Activated CD4-positive, alpha-beta memory T cell treated with anti-CD3 and anti-CD28 coated beads for 36 hours (primary cell): ENCODE measurements at regions of chr16 and their contacts with region 1.

Region 1: GRCh38 chr16:84062734-84063640 is 20.4 kb upstream of the SLC38A8 start:
- DNase-seq: peak; percentile 82
- H3K4me3 Mint-ChIP-seq: no peak overlapping the region
- H3K27ac Mint-ChIP-seq: no peak overlapping the region
- H3K4me1 Mint-ChIP-seq: peaks cover 7% of the 10 kb centered on the region
- H3K27me3 Mint-ChIP-seq: no peaks in the 10 kb centered on the region

Region 2: GRCh38 chr16:83826146-83826913 is 236.7 kb before region 1 on chr16:
- CTCF ChIA-PET with region 1: interaction called, 5 read pairs
- POLR2A ChIA-PET with region 1: no interaction called
- intact Hi-C with region 1: loop called (anchors 5 kb)
- DNase-seq: peak; percentile 87
- H3K4me3 Mint-ChIP-seq: no peak overlapping the region
- H3K27ac Mint-ChIP-seq: no peak overlapping the region
- H3K4me1 Mint-ChIP-seq: peaks cover 2% of the 10 kb centered on the region
- H3K27me3 Mint-ChIP-seq: peaks cover 6% of the 10 kb centered on the region

Region 3: DNA sequence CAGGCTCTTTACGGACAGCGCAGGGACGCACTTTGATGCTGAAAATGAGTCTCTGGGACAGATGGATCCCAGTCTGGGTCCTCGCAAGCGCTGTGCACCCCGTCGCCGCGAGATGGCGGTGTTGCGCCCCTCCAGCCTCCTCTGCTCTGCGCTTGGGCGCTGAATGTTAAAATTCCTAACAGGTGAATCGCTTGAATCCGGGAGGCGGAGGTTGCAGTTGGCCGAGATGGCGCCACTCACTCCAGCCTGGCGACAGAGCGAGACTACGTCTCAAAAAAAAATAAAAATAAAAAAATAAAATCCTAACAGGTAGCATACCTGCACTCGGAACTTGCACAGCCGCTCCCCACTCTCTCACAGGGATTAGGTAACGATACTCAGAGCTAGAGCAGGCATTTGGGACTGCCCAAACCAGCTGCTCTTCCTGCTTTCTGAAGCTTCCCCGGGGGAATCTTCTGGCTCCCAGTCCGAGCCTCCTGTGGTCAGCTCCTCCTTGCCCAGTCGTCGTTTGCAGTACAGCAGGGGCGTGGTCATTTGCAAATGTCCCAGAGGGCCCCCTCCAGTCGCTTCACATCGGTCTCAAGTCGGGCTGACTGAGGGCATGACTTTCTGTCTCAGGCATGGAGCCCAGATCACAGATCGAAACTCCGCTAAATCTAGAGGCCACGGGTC is 136.1 kb before region 1 on chr16:
- CTCF ChIA-PET with region 1: interaction called, 10 read pairs
- POLR2A ChIA-PET with region 1: no interaction called
- intact Hi-C with region 1: no loop called
- DNase-seq: peak; percentile 75
- H3K4me3 Mint-ChIP-seq: no peak overlapping the region
- H3K27ac Mint-ChIP-seq: no peak overlapping the region
- H3K4me1 Mint-ChIP-seq: peaks cover 3% of the 10 kb centered on the region
- H3K27me3 Mint-ChIP-seq: no peaks in the 10 kb centered on the region

Region 4: DNA sequence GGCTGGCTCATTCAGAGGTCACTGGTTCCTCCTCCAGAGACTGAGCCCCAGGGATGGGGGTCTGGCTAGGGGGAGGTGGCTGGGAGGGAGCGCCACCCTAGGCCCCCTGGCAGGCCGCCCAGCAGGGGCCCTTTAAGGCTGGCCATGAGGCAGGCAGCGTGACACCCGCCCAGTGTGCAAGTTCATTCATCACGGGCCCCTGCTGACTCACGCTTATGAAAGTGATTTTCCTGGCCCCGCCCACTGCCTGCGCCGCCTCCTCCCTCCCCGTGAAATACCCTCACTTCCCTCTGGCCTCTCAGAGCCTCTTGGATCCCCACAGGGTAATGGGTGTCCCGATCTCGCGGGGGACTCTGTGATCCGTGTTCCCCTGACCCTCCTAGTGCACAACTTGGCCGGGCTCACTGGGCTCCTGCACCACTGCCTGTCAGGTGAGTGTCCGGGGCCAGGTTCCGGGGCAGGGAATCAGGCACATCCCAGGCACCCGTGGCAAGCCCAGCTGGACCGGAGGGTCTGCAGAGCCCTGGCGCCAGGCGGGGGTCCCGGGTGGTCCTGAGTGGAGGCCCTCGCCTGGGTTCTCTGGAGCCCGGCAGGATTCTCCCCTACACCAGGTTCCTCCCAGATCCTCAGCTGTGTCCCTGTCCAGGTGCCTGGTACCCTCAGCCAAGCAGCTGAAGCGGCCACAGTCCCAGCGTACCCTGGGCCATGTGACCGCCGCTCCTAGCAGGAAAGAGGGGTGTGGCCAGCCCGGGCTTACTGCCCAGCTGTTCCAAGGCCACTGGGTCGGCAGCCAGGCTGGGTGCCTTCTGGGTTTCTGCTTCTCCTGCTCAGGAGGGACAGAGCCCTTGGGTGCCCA is 109.8 kb before region 1 on chr16 and contains the start of gene OSGIN1:
- CTCF ChIA-PET with region 1: interaction called, 110 read pairs
- POLR2A ChIA-PET with region 1: interaction called, 3 read pairs
- intact Hi-C with region 1: loop called (anchors 1 kb)
- DNase-seq: peak; percentile 91
- H3K4me3 Mint-ChIP-seq: peak within 1 kb of the TSS; percentile 57
- H3K27ac Mint-ChIP-seq: no peak within 1 kb of the TSS
- H3K4me1 Mint-ChIP-seq: peaks cover 9% of the 10 kb centered on the region
- H3K27me3 Mint-ChIP-seq: peaks cover 21% of the 10 kb centered on the region
- total RNA-seq, gene OSGIN1: 0.34 to 0.40 TPM

Region 5: GRCh38 chr16:83967806-83968305 is 95.1 kb before region 1 on chr16 and contains the start of gene NECAB2:
- CTCF ChIA-PET with region 1: interaction called, 3 read pairs
- POLR2A ChIA-PET with region 1: no interaction called
- intact Hi-C with region 1: loop called (anchors 1 kb)
- DNase-seq: peak; percentile 33
- H3K4me3 Mint-ChIP-seq: no peak within 1 kb of the TSS
- H3K27ac Mint-ChIP-seq: no peak within 1 kb of the TSS
- H3K4me1 Mint-ChIP-seq: peaks cover 2% of the 10 kb centered on the region
- H3K27me3 Mint-ChIP-seq: peaks cover 11% of the 10 kb centered on the region
- total RNA-seq, gene NECAB2: not detected

Region 6: DNA sequence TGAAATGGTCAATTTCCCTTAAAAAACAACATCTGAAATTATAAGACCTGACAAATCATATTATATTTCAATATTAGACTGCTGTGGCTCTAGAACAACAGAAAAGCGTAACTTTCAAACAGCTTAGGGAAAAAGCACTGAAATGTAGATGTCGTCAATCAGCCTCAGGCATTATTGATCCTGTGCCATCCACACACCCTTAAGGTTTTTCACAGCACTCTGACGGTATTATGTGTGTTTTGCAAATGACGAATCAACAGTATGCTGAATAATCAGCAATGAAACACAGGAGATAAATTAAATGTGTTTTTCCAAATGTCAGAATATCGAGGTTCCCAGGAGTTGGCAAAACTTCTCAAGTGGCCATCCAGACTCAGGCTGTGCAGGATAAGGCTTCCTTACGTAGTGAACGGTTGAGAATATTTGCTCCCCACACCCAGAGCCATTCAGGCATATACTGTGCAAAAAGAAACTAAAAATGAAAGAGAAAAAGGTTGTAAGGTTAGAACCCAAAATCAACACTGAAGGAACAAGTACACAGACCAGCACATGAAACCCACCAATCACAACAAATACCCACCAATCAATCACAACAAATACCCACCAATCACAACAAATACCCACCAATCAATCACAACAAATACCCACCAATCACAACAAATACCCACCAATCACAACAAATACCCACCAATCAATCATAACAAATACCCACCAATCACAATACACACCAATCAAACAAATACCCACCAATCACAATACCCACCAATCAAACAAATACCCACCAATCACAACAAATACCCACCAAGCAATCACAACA is 61.5 kb after region 1 on chr16:
- CTCF ChIA-PET with region 1: no interaction called
- POLR2A ChIA-PET with region 1: no interaction called
- intact Hi-C with region 1: no loop called
- DNase-seq: no peak
- H3K4me3 Mint-ChIP-seq: no peak overlapping the region
- H3K27ac Mint-ChIP-seq: no peak overlapping the region
- H3K4me1 Mint-ChIP-seq: no peaks in the 10 kb centered on the region
- H3K27me3 Mint-ChIP-seq: no peaks in the 10 kb centered on the region

Region 7: GRCh38 chr16:84175350-84176081 is 112.5 kb after region 1 on chr16:
- CTCF ChIA-PET with region 1: interaction called, 13 read pairs
- POLR2A ChIA-PET with region 1: no interaction called
- intact Hi-C with region 1: no loop called
- DNase-seq: peak; percentile 79
- H3K4me3 Mint-ChIP-seq: no peak overlapping the region
- H3K27ac Mint-ChIP-seq: no peak overlapping the region
- H3K4me1 Mint-ChIP-seq: peaks cover 25% of the 10 kb centered on the region
- H3K27me3 Mint-ChIP-seq: peaks cover 6% of the 10 kb centered on the region

Region 8: DNA sequence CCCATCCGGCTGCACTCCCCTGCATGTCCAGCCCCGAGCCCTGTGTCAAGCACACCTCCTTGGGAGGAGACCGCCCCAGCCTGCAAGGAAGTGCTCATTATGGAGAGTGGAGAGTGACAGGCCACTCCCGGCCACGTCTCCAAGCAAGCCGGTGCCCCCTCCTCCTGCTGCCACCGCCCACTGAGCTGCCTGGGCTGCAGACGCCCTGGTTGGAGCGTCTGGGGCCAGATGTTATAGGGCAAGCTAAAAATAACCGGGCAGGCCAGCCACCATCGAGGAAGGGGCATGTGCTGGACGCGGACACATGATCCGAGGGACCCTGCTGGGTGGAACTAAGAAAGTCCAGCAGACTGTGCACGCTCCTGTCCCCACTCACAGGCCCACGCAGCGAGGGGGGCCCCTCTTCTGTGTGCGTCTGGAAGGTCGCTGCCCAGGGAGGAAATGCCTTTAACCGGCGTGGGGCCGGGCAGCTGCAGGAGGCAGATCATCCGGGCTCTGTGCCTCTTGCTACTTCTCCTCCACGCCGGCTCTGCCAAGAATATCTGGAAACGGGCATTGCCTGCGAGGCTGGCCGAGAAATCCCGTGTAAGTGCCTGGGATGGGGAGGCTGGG is 231.7 kb after region 1 on chr16 and contains the start of gene WFDC1:
- CTCF ChIA-PET with region 1: no interaction called
- POLR2A ChIA-PET with region 1: no interaction called
- intact Hi-C with region 1: no loop called
- DNase-seq: no peak
- H3K4me3 Mint-ChIP-seq: no peak within 1 kb of the TSS
- H3K27ac Mint-ChIP-seq: no peak within 1 kb of the TSS
- H3K4me1 Mint-ChIP-seq: peaks cover 9% of the 10 kb centered on the region
- H3K27me3 Mint-ChIP-seq: peaks cover 47% of the 10 kb centered on the region
- total RNA-seq, gene WFDC1: not detected